ENCODE measurements at regions of chr10 and their contacts with region 1.

Region 1: DNA sequence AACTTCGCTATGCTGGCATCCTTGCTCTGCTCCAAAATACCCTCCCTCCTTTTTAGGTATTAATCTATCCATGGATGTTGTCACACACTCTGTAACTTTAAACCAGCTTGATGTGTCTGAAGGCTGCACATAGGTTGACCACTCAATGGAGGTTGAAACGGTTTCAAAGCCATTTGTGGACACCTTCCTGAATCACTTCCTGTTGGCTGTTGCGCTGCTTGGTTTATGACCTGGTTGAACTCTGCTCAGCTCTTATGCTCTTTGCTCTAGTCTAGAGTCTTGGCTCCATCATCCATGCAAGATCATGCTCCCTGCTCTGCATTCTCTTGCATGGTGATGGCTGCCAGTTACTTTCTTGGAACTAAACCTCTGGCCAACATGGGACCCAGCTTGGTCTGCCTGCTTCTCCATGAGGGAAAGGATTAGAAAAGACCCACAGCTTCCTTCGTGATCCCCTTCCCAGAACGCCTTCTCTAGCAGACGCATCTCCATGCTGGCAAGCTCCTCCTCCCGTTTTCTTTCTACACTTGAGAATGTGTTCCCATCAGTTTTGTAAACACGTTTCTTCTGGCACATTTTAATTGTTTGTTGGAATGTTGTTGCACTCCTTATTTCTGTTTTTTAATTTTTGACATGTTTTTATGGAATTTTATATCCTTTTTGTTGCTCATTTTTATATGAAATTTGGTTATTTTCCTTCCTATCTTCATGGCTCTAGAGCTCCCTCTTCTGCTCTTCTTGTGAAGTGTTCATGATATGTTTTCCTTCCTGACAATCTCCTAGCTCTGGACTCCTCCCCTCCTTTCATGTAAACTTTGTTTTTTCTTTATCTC is 149.8 kb downstream of the XPNPEP1 start:
- DNase-seq: no peak
- H3K4me3 Mint-ChIP-seq: no peak overlapping the region
- H3K27ac Mint-ChIP-seq: no peak overlapping the region
- H3K4me1 Mint-ChIP-seq: no peaks in the 10 kb centered on the region
- H3K27me3 Mint-ChIP-seq: peaks cover 2% of the 10 kb centered on the region

Region 2: GRCh38 chr10:109456566-109457301 is 316.8 kb before region 1 on chr10:
- CTCF ChIA-PET with region 1: no interaction called
- intact Hi-C with region 1: loop called (anchors 10 kb)
- DNase-seq: no peak
- H3K4me3 Mint-ChIP-seq: no peak overlapping the region
- H3K27ac Mint-ChIP-seq: no peak overlapping the region
- H3K4me1 Mint-ChIP-seq: no peaks in the 10 kb centered on the region
- H3K27me3 Mint-ChIP-seq: peaks cover 22% of the 10 kb centered on the region

Region 3: GRCh38 chr10:109852475-109853037 is 79.1 kb after region 1 on chr10:
- CTCF ChIA-PET with region 1: interaction called, 11 read pairs
- intact Hi-C with region 1: loop called (anchors 5 kb)
- DNase-seq: peak; percentile 87
- H3K4me3 Mint-ChIP-seq: no peak overlapping the region
- H3K27ac Mint-ChIP-seq: no peak overlapping the region
- H3K4me1 Mint-ChIP-seq: peaks cover 14% of the 10 kb centered on the region
- H3K27me3 Mint-ChIP-seq: no peaks in the 10 kb centered on the region